ENCODE measurements at regions of chr12 and their contacts with region 1.

Region 1: GRCh38 chr12:38448991-38449390 is 132.4 kb downstream of the ALG10B start:
- DNase-seq: no peak
- ATAC-seq: no peak
- H3K4me3 ChIP-seq: no peak overlapping the region
- H3K27ac ChIP-seq: no peak overlapping the region
- H3K4me1 ChIP-seq: peaks cover 21% of the 10 kb centered on the region
- H3K27me3 ChIP-seq: no peaks in the 10 kb centered on the region
- CTCF ChIP-seq: no peak

Region 2: DNA sequence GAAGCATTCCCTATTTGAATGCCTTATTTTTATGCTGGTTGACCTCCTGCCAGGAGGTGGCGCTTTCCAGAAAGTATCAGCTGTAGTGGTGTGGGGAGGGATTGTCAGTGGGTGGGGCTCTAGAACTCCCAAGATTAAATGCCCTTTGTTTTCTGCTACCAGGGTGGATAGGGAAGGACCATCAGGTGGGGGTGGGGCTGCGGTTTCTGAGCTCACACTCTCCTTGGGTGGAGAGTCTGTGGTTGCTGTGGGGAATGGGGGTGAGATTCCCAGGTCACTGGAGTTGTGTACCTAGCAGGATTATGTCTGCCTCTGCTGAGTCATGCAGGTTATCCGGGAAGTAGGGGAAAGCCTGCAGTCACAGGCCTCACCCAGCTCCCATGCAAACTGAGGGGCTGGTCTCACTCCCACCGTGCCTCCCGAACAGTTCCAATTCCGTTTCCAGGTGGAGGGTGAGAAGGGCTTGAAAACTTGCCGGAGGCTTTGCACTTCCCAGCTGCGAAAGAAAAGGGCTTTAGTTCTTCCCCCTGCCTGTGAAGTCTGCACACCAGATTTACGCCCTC is 64.1 kb before region 1 on chr12:
- CTCF ChIA-PET with region 1: no interaction called
- POLR2A ChIA-PET with region 1: no interaction called
- intact Hi-C with region 1: loop called (anchors 1 kb)
- DNase-seq: peak; percentile 98
- ATAC-seq: peak; percentile 89
- H3K4me3 ChIP-seq: peak overlapping the region; percentile 45
- H3K27ac ChIP-seq: peak overlapping the region; percentile 96
- H3K4me1 ChIP-seq: peaks cover 48% of the 10 kb centered on the region
- H3K27me3 ChIP-seq: no peaks in the 10 kb centered on the region
- CTCF ChIP-seq: peak; percentile 72

Region 3: GRCh38 chr12:38490941-38491340 is 42.0 kb after region 1 on chr12:
- CTCF ChIA-PET with region 1: no interaction called
- POLR2A ChIA-PET with region 1: no interaction called
- intact Hi-C with region 1: loop called (anchors 5 kb)
- DNase-seq: no peak
- ATAC-seq: no peak
- H3K4me3 ChIP-seq: no peak overlapping the region
- H3K27ac ChIP-seq: no peak overlapping the region
- H3K4me1 ChIP-seq: no peaks in the 10 kb centered on the region
- H3K27me3 ChIP-seq: no peaks in the 10 kb centered on the region
- CTCF ChIP-seq: no peak

Region 4: GRCh38 chr12:38555620-38556596 is 106.9 kb after region 1 on chr12:
- CTCF ChIA-PET with region 1: no interaction called
- POLR2A ChIA-PET with region 1: no interaction called
- intact Hi-C with region 1: loop called (anchors 5 kb)
- DNase-seq: peak; percentile 41
- ATAC-seq: peak; percentile 51
- H3K4me3 ChIP-seq: no peak overlapping the region
- H3K27ac ChIP-seq: no peak overlapping the region
- H3K4me1 ChIP-seq: peaks cover 3% of the 10 kb centered on the region; the same call in 1 of the 2 replicates
- H3K27me3 ChIP-seq: no peaks in the 10 kb centered on the region
- CTCF ChIP-seq: 0 out of 2 replicates have a peak, but pooled peaks have one; percentile 22

Region 5: GRCh38 chr12:38587594-38587993 is 138.6 kb after region 1 on chr12:
- CTCF ChIA-PET with region 1: no interaction called
- POLR2A ChIA-PET with region 1: no interaction called
- intact Hi-C with region 1: no loop called
- DNase-seq: no peak
- ATAC-seq: no peak
- H3K4me3 ChIP-seq: no peak overlapping the region
- H3K27ac ChIP-seq: no peak overlapping the region
- H3K4me1 ChIP-seq: peaks cover 30% of the 10 kb centered on the region
- H3K27me3 ChIP-seq: no peaks in the 10 kb centered on the region
- CTCF ChIP-seq: no peak

Measured in PC-3 (cell line).